MCF 10A (cell line): ENCODE measurements at regions of chr5 and their contacts with region 1.

Region 1: DNA sequence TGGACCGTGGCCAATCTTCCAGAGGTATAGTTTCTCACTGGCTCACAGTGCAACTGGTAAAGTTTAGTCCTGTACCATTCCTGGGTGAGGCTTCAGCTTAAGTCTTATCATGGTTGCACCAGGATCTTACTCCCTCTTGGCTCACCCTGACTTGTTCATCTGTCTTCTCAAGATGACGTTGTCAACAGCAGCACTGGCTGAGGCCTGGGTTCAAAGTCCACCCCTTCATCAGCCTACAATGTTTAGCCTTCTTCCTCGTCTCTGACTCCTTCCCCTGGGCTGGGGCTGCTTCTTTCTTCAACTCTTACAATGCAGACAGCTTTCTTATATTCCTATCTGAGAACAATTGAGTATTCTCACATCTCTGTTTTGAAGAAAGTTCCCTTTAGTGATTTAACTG is 311.1 kb upstream of the CLINT1 start:
- DNase-seq: no peak
- H3K4me3 Mint-ChIP-seq: no peak overlapping the region
- H3K27ac Mint-ChIP-seq: no peak overlapping the region
- H3K4me1 Mint-ChIP-seq: no peaks in the 10 kb centered on the region
- H3K27me3 Mint-ChIP-seq: no peaks in the 10 kb centered on the region
- CTCF ChIP-seq: no peak

Region 2: GRCh38 chr5:157845894-157846598 is 324.0 kb before region 1 on chr5:
- CTCF ChIA-PET with region 1: no interaction called
- POLR2A ChIA-PET with region 1: no interaction called
- intact Hi-C with region 1: no loop called
- DNase-seq: no peak
- H3K4me3 Mint-ChIP-seq: no peak overlapping the region
- H3K27ac Mint-ChIP-seq: no peak overlapping the region
- H3K4me1 Mint-ChIP-seq: peaks cover 16% of the 10 kb centered on the region
- H3K27me3 Mint-ChIP-seq: no peaks in the 10 kb centered on the region
- CTCF ChIP-seq: no peak

Region 3: GRCh38 chr5:158154226-158155005 is 15.6 kb before region 1 on chr5:
- CTCF ChIA-PET with region 1: interaction called, 18 read pairs
- POLR2A ChIA-PET with region 1: interaction called, 4 read pairs
- intact Hi-C with region 1: no loop called
- DNase-seq: peak; percentile 98
- H3K4me3 Mint-ChIP-seq: no peak overlapping the region
- H3K27ac Mint-ChIP-seq: no peak overlapping the region
- H3K4me1 Mint-ChIP-seq: peaks cover 12% of the 10 kb centered on the region
- H3K27me3 Mint-ChIP-seq: no peaks in the 10 kb centered on the region
- CTCF ChIP-seq: no peak